B cell (primary cell): ENCODE measurements at regions of chr5 and their contacts with region 1.

Region 1: DNA sequence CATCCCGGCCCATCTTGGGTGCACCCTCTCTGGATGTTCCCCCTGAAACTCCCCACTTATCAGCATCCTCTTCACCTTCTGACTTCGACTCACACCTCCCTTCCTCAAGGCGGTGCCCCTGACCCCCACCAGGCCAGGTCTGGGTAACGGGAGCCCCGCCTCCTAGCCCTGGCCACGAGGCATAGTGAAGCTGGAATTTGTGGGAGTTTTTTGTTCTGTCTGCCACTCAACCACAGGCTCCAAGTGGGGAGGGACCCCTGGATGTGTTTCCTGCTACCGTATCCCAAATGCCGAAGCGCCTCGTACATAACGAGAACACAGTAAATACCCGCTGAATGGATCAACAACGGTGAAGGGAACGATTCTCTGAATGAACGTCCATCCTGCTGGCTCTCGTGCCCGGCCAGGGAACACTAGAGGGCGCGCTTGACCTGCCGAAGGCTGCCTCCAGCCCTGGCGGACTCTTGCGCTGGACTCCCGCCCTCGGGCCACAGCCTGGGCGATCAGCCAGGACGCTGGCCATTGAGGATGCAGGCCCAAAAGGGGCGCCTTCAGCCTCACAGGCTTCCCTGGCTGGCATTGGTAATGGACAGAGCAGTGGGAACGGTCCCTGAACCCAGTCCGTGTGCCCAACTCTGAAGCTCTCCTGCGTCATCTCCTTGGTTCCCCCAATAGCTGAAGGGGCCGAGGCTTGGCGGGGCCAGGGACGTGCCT is 47.3 kb upstream of the PHYKPL start:
- DNase-seq: peak; percentile 60
- ATAC-seq: peak; percentile 45
- H3K4me3 ChIP-seq: no peak overlapping the region
- H3K4me3 Mint-ChIP-seq: no peak overlapping the region
- H3K27ac ChIP-seq: no peak overlapping the region
- H3K27ac Mint-ChIP-seq: no peak overlapping the region
- H3K4me1 ChIP-seq: peaks cover 0 to 6% of the 10 kb centered on the region in 2 donors
- H3K4me1 Mint-ChIP-seq: peaks cover 2% of the 10 kb centered on the region
- H3K27me3 ChIP-seq: peaks cover 0 to 10% (median 0%) of the 10 kb centered on the region in 4 experiments
- H3K27me3 Mint-ChIP-seq: peaks cover 25% of the 10 kb centered on the region
- CTCF ChIP-seq: peak; percentile 73

Region 2: GRCh38 chr5:178551059-178551458 is 271.2 kb after region 1 on chr5:
- CTCF ChIA-PET with region 1: interaction called, 24 read pairs
- POLR2A ChIA-PET with region 1: no interaction called
- intact Hi-C with region 1: no loop called
- DNase-seq: no peak
- ATAC-seq: no peak
- H3K4me3 ChIP-seq: no peak overlapping the region
- H3K4me3 Mint-ChIP-seq: no peak overlapping the region
- H3K27ac ChIP-seq: no peak overlapping the region
- H3K27ac Mint-ChIP-seq: no peak overlapping the region
- H3K4me1 ChIP-seq: no peaks in the 10 kb centered on the region
- H3K4me1 Mint-ChIP-seq: no peaks in the 10 kb centered on the region
- H3K27me3 ChIP-seq: peaks cover 0 to 5% (median 0%) of the 10 kb centered on the region in 4 experiments
- H3K27me3 Mint-ChIP-seq: peaks cover 7% of the 10 kb centered on the region
- CTCF ChIP-seq: peak; percentile 30

Region 3: DNA sequence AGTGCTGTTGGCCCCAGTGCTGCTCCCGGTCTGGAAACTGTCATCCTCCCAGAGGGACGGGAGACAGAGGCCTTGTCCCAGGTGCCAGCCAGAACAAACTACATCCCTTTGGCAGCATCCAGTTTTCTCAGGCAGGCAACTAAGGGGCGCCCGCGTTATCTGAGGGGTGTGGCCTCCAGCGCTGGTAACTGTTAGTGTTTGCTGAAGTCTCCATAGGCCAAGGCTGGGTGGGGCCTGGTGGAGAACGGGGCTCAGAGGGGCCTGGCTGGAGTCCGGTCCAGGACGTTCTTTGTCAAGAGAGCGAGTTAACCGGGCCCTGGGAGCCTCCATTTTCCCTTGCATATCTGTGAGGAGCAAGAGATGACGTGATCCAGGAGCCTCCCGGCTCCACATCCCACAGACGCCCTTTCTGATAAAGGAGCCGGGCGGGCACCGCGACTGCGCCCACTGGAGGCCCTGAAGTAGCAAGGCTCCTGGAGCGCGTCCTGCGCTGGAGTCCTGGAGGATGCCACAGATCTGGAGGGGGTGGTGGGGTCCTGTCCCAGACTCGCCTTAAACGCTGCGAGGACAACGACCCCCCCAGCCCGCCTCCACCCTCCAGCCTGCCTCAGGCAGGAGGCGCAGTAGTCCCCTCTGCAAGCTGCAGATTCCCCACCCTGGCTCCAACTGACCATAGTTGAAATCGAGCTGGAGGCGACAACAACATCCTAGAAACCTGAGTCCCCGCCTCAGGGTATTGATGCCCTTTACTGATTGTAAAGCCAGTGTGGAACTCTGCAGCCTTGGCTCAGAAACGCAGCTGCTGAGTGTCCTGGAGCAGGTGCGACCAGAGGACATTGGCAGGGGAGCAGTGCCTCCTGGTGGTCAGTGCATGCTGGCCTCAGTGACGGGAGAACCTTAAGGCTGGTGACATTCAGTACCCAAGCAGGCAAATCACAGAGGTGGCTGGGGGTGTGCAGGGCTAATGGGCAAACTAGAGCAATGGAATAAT is 559.1 kb after region 1 on chr5:
- CTCF ChIA-PET with region 1: no interaction called
- POLR2A ChIA-PET with region 1: no interaction called
- intact Hi-C with region 1: loop called (anchors 5 kb)
- DNase-seq: peak; percentile 47
- ATAC-seq: peak; percentile 28
- H3K4me3 ChIP-seq: no peak overlapping the region
- H3K4me3 Mint-ChIP-seq: no peak overlapping the region
- H3K27ac ChIP-seq: no peak overlapping the region
- H3K27ac Mint-ChIP-seq: no peak overlapping the region
- H3K4me1 ChIP-seq: no peaks in the 10 kb centered on the region
- H3K4me1 Mint-ChIP-seq: no peaks in the 10 kb centered on the region
- H3K27me3 ChIP-seq: no peaks in the 10 kb centered on the region
- H3K27me3 Mint-ChIP-seq: peaks cover 5% of the 10 kb centered on the region
- CTCF ChIP-seq: peak; percentile 32

Region 4: GRCh38 chr5:179495906-179496455 is 1216.1 kb after region 1 on chr5:
- CTCF ChIA-PET with region 1: interaction called, 11 read pairs
- POLR2A ChIA-PET with region 1: no interaction called
- intact Hi-C with region 1: no loop called
- DNase-seq: no peak
- ATAC-seq: no peak
- H3K4me3 ChIP-seq: no peak overlapping the region
- H3K4me3 Mint-ChIP-seq: no peak overlapping the region
- H3K27ac ChIP-seq: no peak overlapping the region
- H3K27ac Mint-ChIP-seq: no peak overlapping the region
- H3K4me1 ChIP-seq: no peaks in the 10 kb centered on the region
- H3K4me1 Mint-ChIP-seq: peaks cover 7% of the 10 kb centered on the region
- H3K27me3 ChIP-seq: peaks cover 0 to 5% (median 0%) of the 10 kb centered on the region in 4 experiments
- H3K27me3 Mint-ChIP-seq: peaks cover 6% of the 10 kb centered on the region
- CTCF ChIP-seq: no peak